ENCODE measurements at regions of chr1 and their contacts with region 1.

Region 1: GRCh38 chr1:54488779-54489626 is 59.0 kb upstream of the ACOT11 start:
- DNase-seq: peak; percentile 94
- H3K4me3 Mint-ChIP-seq: peak overlapping the region; percentile 86
- H3K27ac Mint-ChIP-seq: peak overlapping the region; percentile 69
- H3K4me1 Mint-ChIP-seq: peaks cover 31% of the 10 kb centered on the region
- H3K27me3 Mint-ChIP-seq: peaks cover 29% of the 10 kb centered on the region

Region 2: DNA sequence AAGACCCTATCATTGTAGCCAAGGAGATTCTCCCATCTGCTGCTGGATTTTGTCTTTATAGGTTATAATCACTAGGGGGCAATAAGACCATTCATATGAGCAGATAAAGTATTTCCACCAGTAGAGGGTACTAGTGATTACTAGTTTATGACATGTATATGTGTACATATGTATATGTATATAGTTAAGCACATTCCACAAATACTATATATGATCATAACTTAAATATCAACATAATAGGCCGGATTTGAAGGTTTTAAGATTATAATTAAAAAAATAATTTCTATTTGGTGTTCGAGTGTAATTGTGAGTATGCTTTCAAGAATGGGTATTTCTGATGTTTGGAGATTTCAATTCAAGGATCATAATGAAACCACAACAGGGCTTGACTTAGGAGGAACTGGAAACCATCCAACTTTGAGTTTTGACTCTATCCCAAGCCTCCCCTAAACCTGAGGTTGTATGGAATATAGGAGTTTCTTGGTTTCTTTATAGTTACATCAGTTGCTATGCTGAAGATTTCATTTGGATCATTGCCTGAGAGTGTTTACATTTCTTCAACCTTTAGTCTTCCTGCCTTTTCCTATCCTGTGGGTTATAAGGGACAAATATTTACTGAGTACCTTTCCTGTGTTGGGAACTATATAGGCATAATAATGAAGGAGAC is 418.7 kb before region 1 on chr1:
- intact Hi-C with region 1: loop called (anchors 1 kb)
- DNase-seq: no peak
- H3K4me3 Mint-ChIP-seq: no peak overlapping the region
- H3K27ac Mint-ChIP-seq: no peak overlapping the region
- H3K4me1 Mint-ChIP-seq: no peaks in the 10 kb centered on the region
- H3K27me3 Mint-ChIP-seq: no peaks in the 10 kb centered on the region

Region 3: GRCh38 chr1:54180701-54181360 is 308.2 kb before region 1 on chr1:
- intact Hi-C with region 1: loop called (anchors 1 kb)
- DNase-seq: no peak
- H3K4me3 Mint-ChIP-seq: no peak overlapping the region
- H3K27ac Mint-ChIP-seq: no peak overlapping the region
- H3K4me1 Mint-ChIP-seq: no peaks in the 10 kb centered on the region
- H3K27me3 Mint-ChIP-seq: no peaks in the 10 kb centered on the region

Region 4: DNA sequence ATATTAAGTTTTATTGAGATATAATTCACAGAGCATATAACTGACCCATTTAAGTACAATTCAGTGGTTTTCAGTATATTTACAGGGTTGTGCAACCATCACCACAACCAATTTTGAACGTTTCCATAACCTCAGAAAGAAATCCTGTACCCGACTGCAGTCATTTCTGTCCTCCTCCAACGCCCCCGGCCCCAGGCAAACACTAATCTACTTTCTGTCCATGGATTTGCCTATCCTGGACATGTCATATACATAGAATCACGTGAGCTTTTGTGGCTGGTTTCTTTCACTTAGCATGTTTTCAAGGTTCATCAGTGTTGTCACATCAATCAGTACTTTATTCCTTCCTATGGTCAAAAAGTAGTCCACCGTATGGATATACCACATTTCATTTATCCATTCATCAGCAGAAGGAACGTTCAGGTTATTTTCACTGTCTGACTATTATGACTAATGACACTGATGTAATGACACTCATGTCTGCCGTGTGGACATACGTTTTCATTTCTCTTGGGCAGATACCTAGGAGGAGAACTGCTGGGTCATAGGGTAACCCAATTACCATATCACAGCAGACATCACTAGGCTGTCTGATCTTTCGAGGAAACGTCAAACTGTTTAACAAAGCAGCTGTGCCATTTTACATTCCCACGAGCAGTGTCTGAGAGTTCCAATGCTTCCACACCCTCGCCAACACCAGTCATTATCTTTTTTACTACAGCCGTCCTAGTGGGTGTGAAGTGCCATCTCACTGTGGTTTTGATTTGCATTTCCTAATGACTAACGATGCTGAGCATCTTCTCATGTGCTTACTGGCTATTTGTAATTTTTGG is 258.3 kb before region 1 on chr1:
- intact Hi-C with region 1: loop called (anchors 2 kb)
- DNase-seq: no peak
- H3K4me3 Mint-ChIP-seq: peak overlapping the region; percentile 8
- H3K27ac Mint-ChIP-seq: peak overlapping the region; percentile 59
- H3K4me1 Mint-ChIP-seq: peaks cover 30% of the 10 kb centered on the region
- H3K27me3 Mint-ChIP-seq: no peaks in the 10 kb centered on the region

Region 5: GRCh38 chr1:54355931-54356679 is 132.9 kb before region 1 on chr1:
- intact Hi-C with region 1: loop called (anchors 5 kb)
- DNase-seq: peak; percentile 70
- H3K4me3 Mint-ChIP-seq: peak overlapping the region; percentile 81
- H3K27ac Mint-ChIP-seq: peak overlapping the region; percentile 86
- H3K4me1 Mint-ChIP-seq: peaks cover 78% of the 10 kb centered on the region
- H3K27me3 Mint-ChIP-seq: no peaks in the 10 kb centered on the region

Region 6: GRCh38 chr1:54464482-54465146 is 24.4 kb before region 1 on chr1:
- intact Hi-C with region 1: no loop called
- DNase-seq: peak; percentile 56
- H3K4me3 Mint-ChIP-seq: no peak overlapping the region
- H3K27ac Mint-ChIP-seq: peak overlapping the region; percentile 67
- H3K4me1 Mint-ChIP-seq: peaks cover 30% of the 10 kb centered on the region
- H3K27me3 Mint-ChIP-seq: peaks cover 4% of the 10 kb centered on the region

Region 7: DNA sequence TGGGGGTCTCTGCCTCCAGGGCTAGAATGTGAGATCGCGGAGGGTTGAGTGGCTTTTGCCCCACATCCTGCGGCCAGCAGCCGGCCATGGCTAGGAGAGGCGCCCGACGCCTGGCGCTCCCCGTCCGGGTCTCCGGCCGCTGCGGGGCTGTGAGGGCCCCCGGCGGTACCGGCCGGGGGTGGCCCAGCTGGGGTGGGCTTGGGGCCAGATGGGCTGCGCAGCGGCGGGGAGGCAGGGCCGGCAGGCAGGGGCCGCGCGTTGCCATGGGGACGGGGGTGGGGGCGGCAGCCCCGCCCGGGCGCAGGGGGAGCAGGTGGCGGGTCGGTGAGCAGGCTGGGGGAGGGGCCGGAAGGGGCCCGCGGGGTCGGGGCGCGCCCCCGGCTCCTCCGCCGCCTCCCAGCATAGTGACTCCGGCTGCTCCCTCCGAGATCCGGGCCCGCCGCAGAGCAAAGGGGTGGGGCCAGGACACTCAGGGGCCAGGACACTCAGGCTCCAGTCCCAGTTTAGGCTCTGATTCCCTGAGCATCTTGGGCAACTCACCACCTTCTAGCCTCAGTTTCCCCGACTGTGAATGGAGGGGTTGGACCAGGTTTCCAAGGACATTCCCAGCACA is 14.3 kb before region 1 on chr1:
- intact Hi-C with region 1: no loop called
- DNase-seq: peak; percentile 72
- H3K4me3 Mint-ChIP-seq: peak overlapping the region; percentile 71
- H3K27ac Mint-ChIP-seq: no peak overlapping the region
- H3K4me1 Mint-ChIP-seq: peaks cover 20% of the 10 kb centered on the region
- H3K27me3 Mint-ChIP-seq: peaks cover 24% of the 10 kb centered on the region

Measured in activated CD4-positive, alpha-beta T cell treated with anti-CD3 and anti-CD28 coated beads, Interleukin-2, amount 10 ng/mL, durations not matched to agents 24 days and 14 days (primary cell).